Breast epithelium (tissue), 4 donors: ENCODE measurements at regions of chr1 and their contacts with region 1.

Region 1: GRCh38 chr1:155017041-155017945 is 14.7 kb downstream of the ZBTB7B start:
- DNase-seq: peak; percentile 95 to 97
- H3K4me3 ChIP-seq: peak overlapping the region; percentile 44 to 59 (median 47)
- H3K27ac ChIP-seq: peak overlapping the region; percentile 91 to 92
- H3K4me1 ChIP-seq: peaks cover 0 to 11% of the 10 kb centered on the region in 2 donors
- H3K27me3 ChIP-seq: no peaks in the 10 kb centered on the region
- CTCF ChIP-seq: peak; percentile 96 to 100 (median 99)
- POLR2A ChIP-seq: no peak

Region 2: GRCh38 chr1:154974063-154974807 is 43.1 kb before region 1 on chr1 and contains the start of gene CKS1B:
- intact Hi-C with region 1: no loop called
- DNase-seq: peak; percentile 99 to 100
- H3K4me3 ChIP-seq: peak within 1 kb of the TSS; percentile 57 to 76 (median 76)
- H3K27ac ChIP-seq: peak within 1 kb of the TSS; percentile 99 to 100
- H3K4me1 ChIP-seq: peaks cover 14 to 26% of the 10 kb centered on the region in 2 donors
- H3K27me3 ChIP-seq: no peaks in the 10 kb centered on the region
- CTCF ChIP-seq: no peak
- POLR2A ChIP-seq: peak; percentile 75
- total RNA-seq, gene CKS1B: 44.6 to 104 (median 47.3) TPM

Region 3: GRCh38 chr1:155050560-155051341 is 33.5 kb after region 1 on chr1 and contains the start of gene ADAM15:
- intact Hi-C with region 1: loop called (anchors 5 kb)
- DNase-seq: peak; percentile 70 to 84
- H3K4me3 ChIP-seq: peak within 1 kb of the TSS; percentile 77 to 87 (median 80)
- H3K27ac ChIP-seq: peak within 1 kb of the TSS; percentile 90 to 92
- H3K4me1 ChIP-seq: peaks cover 6 to 9% of the 10 kb centered on the region in 2 donors
- H3K27me3 ChIP-seq: no peaks in the 10 kb centered on the region
- CTCF ChIP-seq: peak; percentile 82 to 93 (median 88)
- POLR2A ChIP-seq: no peak
- total RNA-seq, gene ADAM15: 97.8 to 155 (median 109) TPM